Activated B cell treated with CpG ODN at 0.5 μM for 24 hours (primary cell): ENCODE measurements at regions of chr12 and their contacts with region 1.

Region 1: DNA sequence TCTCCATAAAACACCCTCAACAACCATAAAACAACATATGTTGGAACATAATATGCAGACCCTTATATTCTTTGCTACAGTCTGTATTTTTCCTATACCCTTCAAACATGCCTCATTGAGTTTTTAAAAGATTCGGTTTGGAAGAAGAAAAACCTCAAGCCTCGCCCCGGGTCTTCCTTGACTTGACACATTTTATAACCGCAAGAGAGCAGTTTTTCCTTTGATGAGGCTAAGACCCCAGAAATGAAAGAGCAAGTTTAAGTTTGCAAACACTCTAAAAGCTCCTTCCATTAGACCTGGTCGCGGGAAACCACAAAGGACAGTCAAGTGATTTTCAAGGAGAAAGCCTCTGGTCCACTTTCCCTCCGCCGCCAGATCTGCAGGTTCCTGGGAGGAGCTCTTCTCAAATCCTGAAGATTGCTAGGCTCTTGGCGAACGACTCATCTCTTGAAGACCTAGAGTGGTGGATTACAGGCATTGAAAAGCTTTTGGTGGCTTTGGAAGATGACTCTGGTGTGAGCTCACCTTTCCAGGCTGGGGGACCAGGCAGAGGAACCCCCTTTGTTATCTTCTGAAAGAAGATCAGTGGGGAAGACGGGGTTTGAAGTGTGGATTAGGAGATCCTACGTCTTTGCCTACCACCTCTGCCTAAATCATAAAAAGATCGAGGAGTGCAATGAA is at the start of gene ASCL4:
- DNase-seq: no peak
- ATAC-seq: no peak
- H3K4me3 Mint-ChIP-seq: no peak within 1 kb of the TSS
- H3K27ac Mint-ChIP-seq: no peak within 1 kb of the TSS
- H3K4me1 Mint-ChIP-seq: peaks cover 20% of the 10 kb centered on the region
- H3K27me3 Mint-ChIP-seq: peaks cover 36% of the 10 kb centered on the region
- CTCF ChIP-seq: no peak
- total RNA-seq, gene ASCL4: not detected in 2 replicates

Region 2: GRCh38 chr12:105912882-105913713 is 1861.4 kb before region 1 on chr12:
- CTCF ChIA-PET with region 1: no interaction called
- POLR2A ChIA-PET with region 1: no interaction called
- intact Hi-C with region 1: no loop called
- DNase-seq: no peak
- ATAC-seq: no peak
- H3K4me3 Mint-ChIP-seq: no peak overlapping the region
- H3K27ac Mint-ChIP-seq: no peak overlapping the region
- H3K4me1 Mint-ChIP-seq: no peaks in the 10 kb centered on the region
- H3K27me3 Mint-ChIP-seq: no peaks in the 10 kb centered on the region
- CTCF ChIP-seq: no peak

Region 3: GRCh38 chr12:107873223-107873622 is 98.7 kb after region 1 on chr12:
- CTCF ChIA-PET with region 1: no interaction called
- POLR2A ChIA-PET with region 1: no interaction called
- intact Hi-C with region 1: loop called (anchors 5 kb)
- DNase-seq: no peak
- ATAC-seq: no peak
- H3K4me3 Mint-ChIP-seq: no peak overlapping the region
- H3K27ac Mint-ChIP-seq: no peak overlapping the region
- H3K4me1 Mint-ChIP-seq: no peaks in the 10 kb centered on the region
- H3K27me3 Mint-ChIP-seq: peaks cover 19% of the 10 kb centered on the region
- CTCF ChIP-seq: no peak